Ovary (tissue), 10 donors: ENCODE measurements at regions of chr9 and their contacts with region 1.

Region 1: DNA sequence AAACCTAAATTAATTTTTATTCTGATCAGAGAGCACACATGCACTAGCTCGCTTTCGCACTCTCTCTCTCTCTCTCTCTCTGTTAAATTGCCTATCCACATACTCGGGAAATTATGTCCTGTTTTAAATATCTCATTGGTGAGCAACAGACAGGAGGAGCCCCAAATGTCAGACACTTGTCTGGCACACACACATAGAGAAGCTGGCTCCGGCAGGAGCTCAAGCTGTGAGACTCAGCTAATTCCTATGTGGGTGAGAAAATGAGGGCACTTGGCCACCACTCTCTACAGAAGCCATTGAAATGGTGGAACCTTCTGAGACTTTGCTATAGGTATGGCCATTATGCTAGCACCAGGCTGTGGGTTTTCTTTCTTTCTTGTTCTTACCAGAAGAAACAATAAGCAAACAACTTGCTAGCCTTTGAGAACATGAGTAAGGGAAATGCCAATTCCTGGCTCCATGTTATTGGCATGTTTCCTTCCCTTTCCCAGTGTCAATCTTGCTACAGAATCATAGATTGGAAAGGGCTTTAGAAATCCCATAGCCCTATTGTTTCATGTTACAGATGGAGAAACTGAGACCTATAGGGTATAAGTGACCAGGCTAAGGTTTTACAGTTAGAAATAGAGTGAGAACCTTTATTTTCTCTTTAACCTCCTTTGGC is 9.0 kb downstream of the RFX3 start:
- DNase-seq: no peak
- H3K4me3 ChIP-seq: no peak overlapping the region
- H3K27ac ChIP-seq: no peak overlapping the region
- H3K4me1 ChIP-seq: no peaks in the 10 kb centered on the region
- H3K27me3 ChIP-seq: no peaks in the 10 kb centered on the region
- CTCF ChIP-seq: no peak
- EP300 ChIP-seq: no peak
- POLR2A ChIP-seq: no peak

Region 2: DNA sequence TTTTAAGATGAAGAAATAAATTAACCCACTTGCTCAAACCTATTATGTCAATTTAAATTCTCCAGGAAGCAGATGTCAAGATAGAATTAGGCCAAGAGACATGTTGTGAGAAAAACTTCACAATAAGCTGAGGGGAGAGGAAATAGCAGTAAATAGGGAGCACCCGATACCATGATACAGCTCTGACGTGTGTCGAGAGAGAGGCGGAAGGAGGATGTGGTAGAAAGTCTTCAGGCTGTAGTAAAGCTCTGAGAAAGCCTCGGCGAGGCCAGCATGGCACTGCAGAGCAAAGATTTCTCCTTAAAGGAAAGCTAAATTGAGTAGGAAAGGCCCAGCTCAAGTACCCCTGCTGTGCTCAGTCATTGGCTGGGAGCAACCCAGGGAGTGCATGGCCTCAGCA is 666.9 kb before region 1 on chr9:
- intact Hi-C with region 1: loop called in 1 of 4 experiments (anchors 5 kb)
- DNase-seq: no peak
- H3K4me3 ChIP-seq: no peak overlapping the region
- H3K27ac ChIP-seq: no peak overlapping the region
- H3K4me1 ChIP-seq: peaks cover 5% of the 10 kb centered on the region
- H3K27me3 ChIP-seq: no peaks in the 10 kb centered on the region
- CTCF ChIP-seq: no peak
- EP300 ChIP-seq: no peak
- POLR2A ChIP-seq: no peak

Region 3: DNA sequence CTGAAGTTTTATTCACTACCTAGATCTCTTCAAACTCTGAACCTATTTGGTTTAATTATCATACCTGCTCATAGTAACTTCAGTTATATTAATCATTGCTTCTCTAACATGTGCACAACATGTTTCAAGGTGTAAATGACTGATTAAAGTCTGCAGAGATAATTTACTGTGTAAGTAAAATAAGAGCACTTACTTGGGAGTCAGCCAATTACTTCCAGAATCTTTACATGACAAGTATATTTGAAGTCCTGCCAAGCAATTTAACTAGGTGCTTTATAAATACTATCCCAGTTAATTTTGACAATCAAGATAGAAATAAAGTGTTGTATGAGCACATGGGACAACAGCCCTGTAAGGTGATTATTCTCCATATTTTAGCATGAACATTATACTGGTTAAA is 100.9 kb before region 1 on chr9:
- intact Hi-C with region 1: no loop called
- DNase-seq: no peak
- H3K4me3 ChIP-seq: no peak overlapping the region
- H3K27ac ChIP-seq: no peak overlapping the region
- H3K4me1 ChIP-seq: no peaks in the 10 kb centered on the region
- H3K27me3 ChIP-seq: no peaks in the 10 kb centered on the region
- CTCF ChIP-seq: no peak
- EP300 ChIP-seq: no peak
- POLR2A ChIP-seq: no peak